GM12878 (cell line): ENCODE measurements at regions of chr2 and their contacts with region 1.

Region 1: DNA sequence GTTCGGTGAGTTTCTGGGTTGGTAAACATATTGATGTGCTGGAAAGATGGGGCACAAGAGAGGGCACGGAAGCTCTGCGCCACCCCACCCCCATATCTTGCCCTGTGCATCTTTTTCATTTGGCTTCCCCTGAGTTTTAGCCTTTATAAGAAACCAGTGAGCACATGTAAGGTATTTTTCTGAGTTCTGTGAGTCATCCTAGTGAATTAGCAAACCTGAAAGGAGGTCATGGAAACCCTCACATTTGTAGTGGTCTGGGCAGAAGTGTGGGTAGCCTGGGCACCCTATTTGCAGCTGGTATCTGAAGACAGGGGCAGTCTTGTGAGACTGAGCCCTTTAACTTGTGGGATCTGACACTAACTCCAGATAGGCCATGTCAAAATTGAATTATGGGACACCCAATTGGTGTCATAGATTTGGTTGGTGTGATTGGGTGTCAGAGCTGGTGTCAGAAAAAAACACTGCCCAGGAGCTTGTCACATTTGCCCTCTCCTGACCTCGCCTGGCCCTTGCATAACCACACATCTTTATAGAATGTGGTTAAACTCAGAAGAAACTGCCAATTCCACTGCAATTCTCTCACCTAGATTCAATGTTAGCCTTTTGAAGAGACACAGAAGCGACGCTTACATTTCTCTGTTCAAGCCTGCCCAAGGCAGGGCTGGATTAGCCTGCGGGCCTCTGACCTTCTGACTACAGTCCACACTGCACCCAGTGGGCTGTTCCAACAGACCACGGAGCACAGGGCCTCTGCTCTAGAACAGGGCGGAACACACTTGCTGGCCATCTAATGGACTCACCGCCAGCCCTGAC is 12.0 kb upstream of the GALM start:
- DNase-seq: peak; percentile 48
- ATAC-seq: peak; percentile 86
- H3K4me3 ChIP-seq: no peak overlapping the region
- H3K27ac ChIP-seq: no peak overlapping the region
- H3K4me1 ChIP-seq: peaks cover 23% of the 10 kb centered on the region
- H3K27me3 ChIP-seq: no peaks in the 10 kb centered on the region
- CTCF ChIP-seq: no peak
- EP300 ChIP-seq: no peak
- POLR2A ChIP-seq: no peak
- RAD21 ChIP-seq: no peak

Region 2: DNA sequence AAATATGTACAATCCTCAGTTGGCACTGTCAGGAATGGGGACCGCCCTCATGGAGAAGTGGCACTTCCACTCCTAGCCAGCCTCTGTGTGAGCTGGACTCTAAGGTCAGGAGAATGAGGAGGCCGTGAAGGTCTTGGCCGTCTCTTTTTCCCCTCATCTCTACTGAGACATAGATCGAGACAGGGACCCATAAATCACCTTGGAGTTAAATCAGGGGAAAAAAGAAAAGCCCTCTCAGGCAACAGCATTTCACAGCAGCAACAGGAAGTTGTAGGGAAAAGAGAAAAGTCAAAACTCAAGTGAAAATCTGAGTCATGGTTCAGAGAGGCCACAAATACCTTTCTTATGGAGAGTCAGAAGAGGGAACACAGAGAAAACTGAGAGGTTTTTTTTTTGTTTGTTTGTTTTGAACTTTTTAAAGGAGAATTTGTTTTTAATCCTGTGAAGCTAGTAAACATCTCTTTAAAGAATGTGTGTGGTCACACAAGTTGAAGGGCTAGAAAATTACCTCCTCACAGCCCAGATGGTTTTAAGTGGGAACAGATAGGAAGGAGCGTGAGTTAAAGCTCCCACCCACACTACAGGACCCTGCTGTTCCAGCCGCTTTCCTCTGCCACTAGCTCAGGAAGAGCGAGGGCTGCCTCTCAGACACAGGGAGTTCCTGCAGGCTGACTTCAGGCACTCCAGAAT is 547.4 kb before region 1 on chr2:
- CTCF ChIA-PET with region 1: no interaction called
- POLR2A ChIA-PET with region 1: no interaction called
- RAD21 ChIA-PET with region 1: no interaction called
- SMC1A ChIA-PET with region 1: no interaction called
- in situ Hi-C with region 1: no loop called
- intact Hi-C with region 1: no loop called
- DNase-seq: no peak
- ATAC-seq: peak; percentile 64
- H3K4me3 ChIP-seq: no peak overlapping the region
- H3K27ac ChIP-seq: peak overlapping the region; percentile 63
- H3K4me1 ChIP-seq: peaks cover 8% of the 10 kb centered on the region
- H3K27me3 ChIP-seq: no peaks in the 10 kb centered on the region
- CTCF ChIP-seq: no peak
- EP300 ChIP-seq: no peak
- POLR2A ChIP-seq: no peak
- RAD21 ChIP-seq: 0 out of 2 replicates have a peak, but pooled peaks have one; percentile 6

Region 3: GRCh38 chr2:38619458-38620164 is 34.3 kb before region 1 on chr2:
- CTCF ChIA-PET with region 1: interaction called, 3 read pairs
- POLR2A ChIA-PET with region 1: interaction called, 6 read pairs
- RAD21 ChIA-PET with region 1: interaction called, 12 read pairs
- SMC1A ChIA-PET with region 1: interaction called, 6 read pairs
- in situ Hi-C with region 1: no loop called
- intact Hi-C with region 1: no loop called
- DNase-seq: no peak
- ATAC-seq: peak; percentile 68
- H3K4me3 ChIP-seq: no peak overlapping the region
- H3K27ac ChIP-seq: no peak overlapping the region
- H3K4me1 ChIP-seq: peaks cover 9% of the 10 kb centered on the region; the same call in 1 of the 2 replicates
- H3K27me3 ChIP-seq: 0 out of 4 replicates have a peak, but pooled peaks cover 0 to 1% of the 10 kb centered on the region in 2 experiments
- CTCF ChIP-seq: no peak
- EP300 ChIP-seq: peak in 1 of 2 experiments; percentile 48; a peak in 1 of 4 replicates
- POLR2A ChIP-seq: no peak
- RAD21 ChIP-seq: no peak

Region 4: GRCh38 chr2:38634684-38635083 is 19.2 kb before region 1 on chr2:
- CTCF ChIA-PET with region 1: interaction called, 3 read pairs
- POLR2A ChIA-PET with region 1: interaction called, 7 read pairs
- RAD21 ChIA-PET with region 1: interaction called, 8 read pairs
- SMC1A ChIA-PET with region 1: interaction called, 13 read pairs
- in situ Hi-C with region 1: no loop called
- intact Hi-C with region 1: no loop called
- DNase-seq: peak; percentile 48
- ATAC-seq: peak; percentile 89
- H3K4me3 ChIP-seq: 0 out of 2 replicates have a peak overlapping the region, but pooled peaks have one; percentile 42
- H3K27ac ChIP-seq: no peak overlapping the region; the same call in none of the 2 replicates
- H3K4me1 ChIP-seq: peaks cover 24% of the 10 kb centered on the region
- H3K27me3 ChIP-seq: no peaks in the 10 kb centered on the region
- CTCF ChIP-seq: no peak
- EP300 ChIP-seq: peak; percentile 87 to 93
- POLR2A ChIP-seq: no peak
- RAD21 ChIP-seq: peak; percentile 12; the same call in 1 of the 2 replicates

Region 5: GRCh38 chr2:38665854-38666555 is 12.1 kb after region 1 on chr2 and contains the start of gene GALM:
- CTCF ChIA-PET with region 1: interaction called, 5 read pairs
- POLR2A ChIA-PET with region 1: interaction called, 20 read pairs
- RAD21 ChIA-PET with region 1: interaction called, 20 read pairs
- SMC1A ChIA-PET with region 1: interaction called, 16 read pairs
- in situ Hi-C with region 1: no loop called
- intact Hi-C with region 1: no loop called
- DNase-seq: no peak
- ATAC-seq: peak; percentile 55
- H3K4me3 ChIP-seq: peak within 1 kb of the TSS; percentile 56; the same call in 1 of the 2 replicates
- H3K27ac ChIP-seq: peak within 1 kb of the TSS; percentile 33; the same call in 1 of the 2 replicates
- H3K4me1 ChIP-seq: peaks cover 28% of the 10 kb centered on the region
- H3K27me3 ChIP-seq: no peaks in the 10 kb centered on the region
- CTCF ChIP-seq: no peak
- EP300 ChIP-seq: no peak
- POLR2A ChIP-seq: no peak
- RAD21 ChIP-seq: no peak
- polyA plus RNA-seq, gene GALM: 1.5 to 1.7 TPM

Region 6: DNA sequence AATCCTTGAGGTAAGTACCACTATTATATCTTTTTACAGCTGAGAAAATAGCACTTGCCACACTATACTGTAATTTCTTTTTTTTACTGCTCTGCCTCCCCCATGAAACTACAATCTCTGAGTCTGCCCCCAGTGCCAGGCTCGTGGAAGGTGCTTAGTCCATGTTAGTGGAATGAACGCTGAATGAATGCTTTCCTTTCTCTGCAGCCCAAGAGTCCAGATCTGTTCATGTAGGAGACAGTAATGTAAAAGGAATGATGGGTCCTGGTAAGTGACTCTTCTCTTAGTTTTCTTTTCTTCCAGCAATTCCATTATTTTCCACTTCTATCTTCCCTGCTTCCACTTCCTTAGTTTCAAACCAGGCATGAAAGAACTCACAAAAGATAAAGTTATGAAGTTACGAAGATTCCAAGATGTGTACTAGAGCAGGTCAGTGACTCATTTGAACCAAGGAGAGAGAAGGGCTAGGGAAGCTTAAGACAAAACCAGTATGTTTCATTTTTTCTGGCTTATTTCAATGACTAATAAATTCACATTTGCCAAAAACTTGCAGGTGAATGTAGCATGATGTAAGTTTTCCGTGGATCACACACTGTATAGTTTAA is 281.7 kb after region 1 on chr2:
- CTCF ChIA-PET with region 1: no interaction called
- POLR2A ChIA-PET with region 1: no interaction called
- RAD21 ChIA-PET with region 1: no interaction called
- SMC1A ChIA-PET with region 1: no interaction called
- in situ Hi-C with region 1: no loop called
- intact Hi-C with region 1: no loop called
- DNase-seq: no peak
- ATAC-seq: no peak
- H3K4me3 ChIP-seq: no peak overlapping the region
- H3K27ac ChIP-seq: no peak overlapping the region
- H3K4me1 ChIP-seq: no peaks in the 10 kb centered on the region
- H3K27me3 ChIP-seq: no peaks in the 10 kb centered on the region; a peak in 1 of 4 replicates
- CTCF ChIP-seq: no peak
- EP300 ChIP-seq: no peak
- POLR2A ChIP-seq: no peak
- RAD21 ChIP-seq: no peak